ENCODE measurements at regions of chr1 and their contacts with region 1.

Region 1: GRCh38 chr1:66331657-66332547 is 202.1 kb upstream of the SGIP1 start:
- DNase-seq: peak in 28 of 35 experiments; percentile 17 to 62 (median 36)
- ATAC-seq: peak; percentile 11 to 29 (median 24)
- H3K4me3 ChIP-seq: peak overlapping the region; percentile 77 to 91
- H3K4me3 Mint-ChIP-seq: peak overlapping the region; percentile 96 to 99 (median 98)
- H3K27ac ChIP-seq: peak overlapping the region; percentile 95
- H3K27ac Mint-ChIP-seq: peak overlapping the region; percentile 98
- H3K4me1 ChIP-seq: peaks cover 36 to 41% of the 10 kb centered on the region in 2 experiments
- H3K4me1 Mint-ChIP-seq: peaks cover 57 to 74% (median 60%) of the 10 kb centered on the region in 3 donors
- H3K27me3 ChIP-seq: no peaks in the 10 kb centered on the region
- H3K27me3 Mint-ChIP-seq: no peaks in the 10 kb centered on the region

Region 2: GRCh38 chr1:66182551-66183178 is 149.2 kb before region 1 on chr1:
- CTCF ChIA-PET with region 1: no interaction called
- POLR2A ChIA-PET with region 1: no interaction called
- DNase-seq: peak in 32 of 35 experiments; percentile 6 to 63 (median 31)
- ATAC-seq: peak in 3 of 4 experiments; percentile 50 to 97 (median 60)
- H3K4me3 ChIP-seq: peak overlapping the region in 1 of 2 donors; percentile 23
- H3K4me3 Mint-ChIP-seq: no peak overlapping the region
- H3K27ac ChIP-seq: no peak overlapping the region
- H3K27ac Mint-ChIP-seq: peak overlapping the region; percentile 35 to 41
- H3K4me1 ChIP-seq: peaks cover 0 to 26% of the 10 kb centered on the region in 2 experiments
- H3K4me1 Mint-ChIP-seq: peaks cover 22 to 24% (median 24%) of the 10 kb centered on the region in 3 donors
- H3K27me3 ChIP-seq: no peaks in the 10 kb centered on the region
- H3K27me3 Mint-ChIP-seq: no peaks in the 10 kb centered on the region

Region 3: GRCh38 chr1:66282343-66282852 is 49.5 kb before region 1 on chr1:
- CTCF ChIA-PET with region 1: interaction called, 4 to 16 read pairs
- POLR2A ChIA-PET with region 1: interaction called, 4 to 7 read pairs
- DNase-seq: peak in 34 of 35 experiments; percentile 25 to 87 (median 58)
- ATAC-seq: peak; percentile 77 to 96 (median 84)
- H3K4me3 ChIP-seq: no peak overlapping the region
- H3K4me3 Mint-ChIP-seq: peak overlapping the region in 1 of 3 donors; percentile 23
- H3K27ac ChIP-seq: peak overlapping the region; percentile 61
- H3K27ac Mint-ChIP-seq: peak overlapping the region; percentile 84 to 87
- H3K4me1 ChIP-seq: peaks cover 27 to 52% of the 10 kb centered on the region in 2 experiments
- H3K4me1 Mint-ChIP-seq: peaks cover 87 to 94% (median 88%) of the 10 kb centered on the region in 3 donors
- H3K27me3 ChIP-seq: no peaks in the 10 kb centered on the region
- H3K27me3 Mint-ChIP-seq: no peaks in the 10 kb centered on the region

Region 4: DNA sequence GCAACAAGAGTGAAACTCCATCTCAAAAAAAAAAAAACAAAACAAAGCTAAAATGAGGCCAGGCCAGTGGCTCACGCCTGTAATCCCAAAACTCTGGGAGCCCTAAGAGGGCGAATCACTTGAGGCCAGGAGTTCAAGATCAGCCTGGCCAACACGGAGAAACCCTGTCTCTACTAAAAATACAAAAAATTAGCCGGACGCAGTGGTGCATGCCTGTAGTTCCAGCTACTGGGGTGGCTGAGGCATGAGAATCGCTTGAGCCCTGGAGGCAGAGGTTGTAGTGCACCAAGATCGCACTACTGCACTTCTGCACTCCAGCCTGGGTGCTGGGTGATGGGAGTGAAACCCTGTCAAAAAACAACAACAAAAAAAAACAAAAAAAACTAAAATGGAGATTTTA is 10.8 kb after region 1 on chr1:
- CTCF ChIA-PET with region 1: interaction called in 1 of 2 experiments, 22 read pairs
- POLR2A ChIA-PET with region 1: interaction called, 4 to 16 read pairs
- DNase-seq: no peak
- ATAC-seq: peak in 1 of 4 experiments; percentile 33
- H3K4me3 ChIP-seq: no peak overlapping the region
- H3K4me3 Mint-ChIP-seq: peak overlapping the region; percentile 29 to 65 (median 48)
- H3K27ac ChIP-seq: no peak overlapping the region
- H3K27ac Mint-ChIP-seq: peak overlapping the region; percentile 85 to 89
- H3K4me1 ChIP-seq: peaks cover 31 to 66% of the 10 kb centered on the region in 2 experiments
- H3K4me1 Mint-ChIP-seq: peaks cover 80 to 89% (median 83%) of the 10 kb centered on the region in 3 donors
- H3K27me3 ChIP-seq: no peaks in the 10 kb centered on the region
- H3K27me3 Mint-ChIP-seq: no peaks in the 10 kb centered on the region

Region 5: GRCh38 chr1:66350001-66350547 is 18.2 kb after region 1 on chr1:
- CTCF ChIA-PET with region 1: interaction called in 1 of 2 experiments, 22 read pairs
- POLR2A ChIA-PET with region 1: interaction called, 6 to 131 read pairs
- DNase-seq: peak in 34 of 35 experiments; percentile 40 to 84 (median 70)
- ATAC-seq: peak; percentile 77 to 87 (median 78)
- H3K4me3 ChIP-seq: no peak overlapping the region
- H3K4me3 Mint-ChIP-seq: peak overlapping the region; percentile 68 to 76 (median 75)
- H3K27ac ChIP-seq: peak overlapping the region; percentile 92
- H3K27ac Mint-ChIP-seq: peak overlapping the region; percentile 82 to 95
- H3K4me1 ChIP-seq: peaks cover 46 to 69% of the 10 kb centered on the region in 2 experiments
- H3K4me1 Mint-ChIP-seq: peaks cover 95 to 98% (median 97%) of the 10 kb centered on the region in 3 donors
- H3K27me3 ChIP-seq: no peaks in the 10 kb centered on the region
- H3K27me3 Mint-ChIP-seq: no peaks in the 10 kb centered on the region